B cell (primary cell): ENCODE measurements at regions of chr11 and their contacts with region 1.

Region 1: DNA sequence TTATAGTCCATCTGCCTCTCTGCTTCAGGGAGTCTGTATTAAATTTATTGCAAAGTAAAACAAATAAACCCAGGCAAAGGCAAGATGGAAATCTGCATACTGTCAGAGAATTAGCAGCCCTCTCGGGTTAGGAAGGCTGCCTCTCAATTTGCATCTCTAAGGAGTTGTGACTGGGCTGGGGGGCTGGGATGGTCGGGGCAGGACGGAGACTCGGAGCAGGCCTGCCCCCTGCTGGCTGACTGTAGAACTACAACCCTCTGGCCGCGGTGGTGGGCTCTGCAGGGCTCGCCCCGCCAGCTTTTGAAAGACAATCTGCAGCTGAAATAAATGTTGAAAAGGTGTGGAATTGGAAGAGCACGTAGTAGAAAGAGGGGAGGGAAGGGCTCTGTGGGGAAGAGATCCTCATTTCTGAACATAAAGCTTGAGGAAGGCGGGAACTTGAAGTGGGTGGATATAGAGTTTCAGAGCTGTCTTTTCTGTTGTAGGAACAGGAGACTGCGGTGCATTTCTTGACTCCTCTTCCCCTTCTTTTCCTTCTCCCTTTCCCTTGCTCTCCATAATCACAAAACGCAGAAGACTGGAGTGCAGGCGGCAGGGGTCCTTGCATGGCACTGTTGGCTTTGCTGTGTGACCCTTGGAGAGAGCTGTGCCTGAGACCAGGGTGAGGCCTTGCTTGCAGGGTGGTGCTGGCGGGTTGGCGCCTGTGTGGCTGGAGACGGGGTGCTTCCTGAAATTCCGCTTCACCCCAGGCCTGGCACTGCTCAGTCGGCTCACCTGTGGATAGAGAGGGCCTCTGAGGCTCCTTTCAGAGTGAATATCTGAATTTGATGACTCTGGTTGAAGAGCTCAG is 22.6 kb upstream of the PKNOX2 start:
- DNase-seq: peak; percentile 73
- ATAC-seq: peak; percentile 99
- H3K4me3 ChIP-seq: no peak overlapping the region
- H3K4me3 Mint-ChIP-seq: no peak overlapping the region
- H3K27ac ChIP-seq: no peak overlapping the region
- H3K27ac Mint-ChIP-seq: no peak overlapping the region
- H3K4me1 ChIP-seq: peaks cover 3 to 6% of the 10 kb centered on the region in 2 donors
- H3K4me1 Mint-ChIP-seq: peaks cover 4% of the 10 kb centered on the region
- H3K27me3 ChIP-seq: peaks cover 0 to 15% (median 9%) of the 10 kb centered on the region in 4 experiments
- H3K27me3 Mint-ChIP-seq: peaks cover 54% of the 10 kb centered on the region
- CTCF ChIP-seq: peak; percentile 100

Region 2: DNA sequence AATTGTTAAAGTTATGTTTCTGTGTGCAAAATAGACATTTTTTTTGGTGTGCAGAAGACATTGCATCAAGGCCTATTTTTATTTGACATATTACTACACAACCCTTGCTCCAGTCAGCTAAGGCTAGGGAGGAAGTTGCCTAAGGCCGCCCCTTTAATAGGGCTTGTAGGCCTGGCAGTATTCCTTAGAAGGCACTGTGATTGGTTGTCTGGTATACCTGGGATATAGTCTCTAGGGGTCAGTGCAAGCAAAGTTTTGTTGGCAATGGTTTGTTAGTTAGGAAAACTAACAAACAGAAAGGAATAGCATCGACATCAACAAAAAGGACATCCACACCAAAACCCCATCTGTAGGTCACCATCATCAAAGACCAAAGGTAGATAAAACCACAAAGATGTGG is 171.0 kb before region 1 on chr11:
- CTCF ChIA-PET with region 1: interaction called, 52 read pairs
- POLR2A ChIA-PET with region 1: no interaction called
- intact Hi-C with region 1: no loop called
- DNase-seq: no peak
- ATAC-seq: no peak
- H3K4me3 ChIP-seq: no peak overlapping the region
- H3K4me3 Mint-ChIP-seq: no peak overlapping the region
- H3K27ac ChIP-seq: no peak overlapping the region
- H3K27ac Mint-ChIP-seq: no peak overlapping the region
- H3K4me1 ChIP-seq: no peaks in the 10 kb centered on the region
- H3K4me1 Mint-ChIP-seq: no peaks in the 10 kb centered on the region
- H3K27me3 ChIP-seq: no peaks in the 10 kb centered on the region
- H3K27me3 Mint-ChIP-seq: no peaks in the 10 kb centered on the region
- CTCF ChIP-seq: no peak

Region 3: DNA sequence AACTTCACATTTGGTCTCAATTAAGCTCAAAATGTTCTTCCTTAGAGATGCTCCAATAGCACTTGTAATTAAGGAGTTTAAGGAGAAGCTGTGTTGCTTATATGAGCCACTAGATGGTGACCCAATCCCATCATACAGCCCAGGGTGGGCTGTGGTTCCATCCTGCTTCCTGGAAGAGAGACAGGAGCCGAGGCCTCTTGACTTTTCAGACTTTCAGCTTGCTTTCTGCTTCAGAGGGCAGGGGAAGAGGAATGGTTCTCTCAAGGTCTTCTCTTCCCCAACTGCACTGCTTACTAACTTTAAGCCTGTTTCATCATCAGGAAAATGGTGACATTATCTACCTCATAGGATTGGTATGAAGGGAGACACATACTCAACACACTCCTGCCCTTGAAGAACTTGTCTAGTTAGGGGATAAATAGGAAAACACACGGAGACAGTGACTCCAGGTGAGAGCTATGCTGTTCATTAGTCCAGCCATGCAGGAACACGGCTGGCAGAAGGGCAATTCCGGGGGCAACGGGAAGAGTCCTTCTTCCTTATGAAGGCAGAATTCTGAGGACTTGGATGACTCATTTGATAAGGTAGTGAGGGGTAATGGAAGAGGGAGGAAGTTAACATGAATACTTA is 50.5 kb before region 1 on chr11:
- CTCF ChIA-PET with region 1: interaction called, 64 read pairs
- POLR2A ChIA-PET with region 1: interaction called, 4 read pairs
- intact Hi-C with region 1: loop called (anchors 1 kb)
- DNase-seq: peak; percentile 29
- ATAC-seq: peak; percentile 28
- H3K4me3 ChIP-seq: no peak overlapping the region
- H3K4me3 Mint-ChIP-seq: no peak overlapping the region
- H3K27ac ChIP-seq: no peak overlapping the region
- H3K27ac Mint-ChIP-seq: no peak overlapping the region
- H3K4me1 ChIP-seq: no peaks in the 10 kb centered on the region
- H3K4me1 Mint-ChIP-seq: no peaks in the 10 kb centered on the region
- H3K27me3 ChIP-seq: no peaks in the 10 kb centered on the region
- H3K27me3 Mint-ChIP-seq: no peaks in the 10 kb centered on the region
- CTCF ChIP-seq: peak; percentile 25

Region 4: DNA sequence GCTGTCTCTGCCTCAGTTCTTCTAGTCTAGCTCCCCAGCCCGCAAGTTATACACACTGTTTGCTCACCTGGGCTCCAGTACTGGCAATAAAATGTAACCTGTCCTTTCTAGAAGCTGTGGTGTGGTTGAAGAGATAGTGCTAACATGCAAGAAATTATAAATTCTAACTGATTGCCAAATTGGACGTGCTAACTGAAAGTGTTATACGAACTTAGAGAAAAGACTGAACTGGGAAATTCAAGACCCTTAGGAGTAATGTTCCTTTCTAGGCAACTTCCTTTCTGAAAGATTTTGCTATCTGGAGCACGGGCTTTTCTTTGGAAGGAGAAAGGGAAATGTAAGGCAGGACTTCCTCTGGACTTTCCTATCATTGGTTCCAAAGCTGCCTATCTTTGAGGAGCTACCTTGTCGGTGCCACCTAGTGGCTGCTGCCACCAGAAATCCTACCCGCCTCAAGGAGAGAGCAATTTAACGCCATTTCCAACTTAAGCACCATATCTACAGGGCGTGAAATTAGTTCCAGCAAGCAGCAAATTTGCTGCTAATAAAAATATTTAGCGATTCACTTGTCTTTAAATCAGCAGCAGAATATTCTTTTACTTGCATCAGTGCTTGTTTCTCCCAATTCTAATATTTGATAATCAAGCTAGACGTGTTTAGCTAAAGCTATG is 17.8 kb before region 1 on chr11:
- CTCF ChIA-PET with region 1: interaction called, 64 read pairs
- POLR2A ChIA-PET with region 1: no interaction called
- intact Hi-C with region 1: no loop called
- DNase-seq: peak; percentile 60
- ATAC-seq: peak; percentile 68
- H3K4me3 ChIP-seq: no peak overlapping the region
- H3K4me3 Mint-ChIP-seq: peak overlapping the region; percentile 69
- H3K27ac ChIP-seq: no peak overlapping the region
- H3K27ac Mint-ChIP-seq: no peak overlapping the region
- H3K4me1 ChIP-seq: peaks cover 9 to 12% of the 10 kb centered on the region in 2 donors
- H3K4me1 Mint-ChIP-seq: peaks cover 13% of the 10 kb centered on the region
- H3K27me3 ChIP-seq: peaks cover 0 to 35% (median 7%) of the 10 kb centered on the region in 4 experiments
- H3K27me3 Mint-ChIP-seq: peaks cover 54% of the 10 kb centered on the region
- CTCF ChIP-seq: peak; percentile 55

Region 5: DNA sequence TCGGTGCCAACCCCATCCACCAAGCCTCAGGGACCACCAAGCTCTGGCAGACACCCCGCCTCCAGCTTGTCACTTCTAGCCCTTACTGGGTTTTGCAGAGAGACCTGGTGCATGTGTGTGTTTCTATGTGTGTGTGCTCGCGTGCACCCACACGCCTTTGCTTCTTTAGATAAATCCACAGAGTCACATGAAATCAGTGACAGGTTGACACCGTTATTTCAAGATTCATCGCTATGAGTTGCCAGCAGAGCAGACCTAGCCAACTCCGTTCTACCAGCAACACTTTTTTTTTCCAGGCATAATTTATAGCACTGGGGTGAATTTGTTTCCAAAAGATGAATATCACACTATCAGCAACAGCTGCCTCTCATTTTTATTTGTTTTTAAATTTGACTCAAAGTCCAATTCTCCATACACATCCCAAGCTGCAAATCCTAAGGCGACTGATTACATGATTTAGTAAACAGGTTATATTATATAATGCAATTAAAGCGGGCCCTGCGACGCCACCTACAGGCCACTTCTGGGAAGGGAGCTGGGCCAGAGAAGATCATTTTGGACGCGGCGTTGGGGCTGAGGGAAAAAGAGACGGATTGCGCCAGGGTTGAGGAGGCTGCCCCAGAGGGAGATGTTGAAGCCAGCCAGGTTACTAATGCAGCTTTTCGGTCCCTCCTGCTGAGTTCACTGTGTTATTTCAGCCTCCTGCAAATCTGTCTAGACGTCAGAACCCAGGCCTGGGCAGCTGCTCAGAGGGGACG is 203.7 kb after region 1 on chr11:
- CTCF ChIA-PET with region 1: interaction called, 4 read pairs
- POLR2A ChIA-PET with region 1: no interaction called
- intact Hi-C with region 1: loop called (anchors 5 kb)
- DNase-seq: peak; percentile 25
- ATAC-seq: no peak
- H3K4me3 ChIP-seq: no peak overlapping the region
- H3K4me3 Mint-ChIP-seq: no peak overlapping the region
- H3K27ac ChIP-seq: no peak overlapping the region
- H3K27ac Mint-ChIP-seq: no peak overlapping the region
- H3K4me1 ChIP-seq: peaks cover 0 to 4% of the 10 kb centered on the region in 2 donors
- H3K4me1 Mint-ChIP-seq: no peaks in the 10 kb centered on the region
- H3K27me3 ChIP-seq: peaks cover 0 to 7% (median 0%) of the 10 kb centered on the region in 4 experiments
- H3K27me3 Mint-ChIP-seq: peaks cover 17% of the 10 kb centered on the region
- CTCF ChIP-seq: peak; percentile 71

Region 6: GRCh38 chr11:125481531-125481930 is 339.6 kb after region 1 on chr11:
- CTCF ChIA-PET with region 1: no interaction called
- POLR2A ChIA-PET with region 1: no interaction called
- intact Hi-C with region 1: no loop called
- DNase-seq: no peak
- ATAC-seq: no peak
- H3K4me3 ChIP-seq: no peak overlapping the region
- H3K4me3 Mint-ChIP-seq: no peak overlapping the region
- H3K27ac ChIP-seq: no peak overlapping the region
- H3K27ac Mint-ChIP-seq: no peak overlapping the region
- H3K4me1 ChIP-seq: no peaks in the 10 kb centered on the region
- H3K4me1 Mint-ChIP-seq: no peaks in the 10 kb centered on the region
- H3K27me3 ChIP-seq: peaks cover 0 to 4% (median 0%) of the 10 kb centered on the region in 4 experiments
- H3K27me3 Mint-ChIP-seq: peaks cover 8% of the 10 kb centered on the region
- CTCF ChIP-seq: no peak

Region 7: DNA sequence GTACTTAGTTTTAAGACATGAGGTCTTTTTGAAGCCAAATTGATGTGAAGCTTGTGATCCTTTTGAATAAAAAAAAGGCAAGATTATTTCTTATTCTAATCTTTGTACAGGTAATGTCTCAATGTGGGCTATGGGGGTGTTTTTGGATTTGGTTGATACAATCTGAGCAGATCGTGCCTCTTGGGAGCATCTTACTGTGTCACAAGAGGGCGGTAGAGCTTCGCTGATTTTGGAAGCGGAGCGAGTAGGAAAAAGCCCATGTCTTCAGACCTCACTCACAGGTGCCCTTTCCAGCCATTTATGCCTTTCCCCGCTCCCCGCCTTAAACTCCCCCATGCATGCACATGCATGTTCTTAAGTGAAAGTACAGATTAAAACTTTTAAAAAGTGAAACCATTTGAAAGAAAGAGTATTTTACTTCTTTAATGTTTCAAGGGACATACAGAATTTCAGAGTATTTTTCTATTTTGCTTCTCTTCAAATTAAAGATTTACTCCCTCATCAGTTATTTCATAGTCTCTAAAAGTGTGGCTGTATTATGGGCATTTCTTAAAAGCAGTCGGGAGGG is 781.2 kb after region 1 on chr11:
- CTCF ChIA-PET with region 1: no interaction called
- POLR2A ChIA-PET with region 1: no interaction called
- intact Hi-C with region 1: no loop called
- DNase-seq: peak; percentile 61
- ATAC-seq: peak; percentile 43
- H3K4me3 ChIP-seq: no peak overlapping the region
- H3K4me3 Mint-ChIP-seq: no peak overlapping the region
- H3K27ac ChIP-seq: no peak overlapping the region
- H3K27ac Mint-ChIP-seq: no peak overlapping the region
- H3K4me1 ChIP-seq: no peaks in the 10 kb centered on the region
- H3K4me1 Mint-ChIP-seq: peaks cover 2% of the 10 kb centered on the region
- H3K27me3 ChIP-seq: peaks cover 0 to 11% (median 1%) of the 10 kb centered on the region in 4 experiments
- H3K27me3 Mint-ChIP-seq: peaks cover 42% of the 10 kb centered on the region
- CTCF ChIP-seq: peak; percentile 72